ENCODE measurements at regions of chr7 and their contacts with region 1.

Region 1: GRCh38 chr7:136009488-136010079 is 32.4 kb upstream of the MTPN start:
- DNase-seq: no peak
- ATAC-seq: peak; percentile 53

Region 2: GRCh38 chr7:135662373-135663114 is 347.0 kb before region 1 on chr7 and contains the start of gene STMP1:
- intact Hi-C with region 1: loop called (anchors 10 kb)
- DNase-seq: peak; percentile 98
- ATAC-seq: peak; percentile 99
- total RNA-seq, gene STMP1: 25.6 TPM

Region 3: GRCh38 chr7:135801045-135801693 is 208.4 kb before region 1 on chr7:
- intact Hi-C with region 1: loop called (anchors 2 kb)
- DNase-seq: no peak
- ATAC-seq: peak; percentile 82

Measured in Right ventricle myocardium superior (tissue), 1 donor.